ENCODE measurements at regions of chr10 and their contacts with region 1.

Region 1: DNA sequence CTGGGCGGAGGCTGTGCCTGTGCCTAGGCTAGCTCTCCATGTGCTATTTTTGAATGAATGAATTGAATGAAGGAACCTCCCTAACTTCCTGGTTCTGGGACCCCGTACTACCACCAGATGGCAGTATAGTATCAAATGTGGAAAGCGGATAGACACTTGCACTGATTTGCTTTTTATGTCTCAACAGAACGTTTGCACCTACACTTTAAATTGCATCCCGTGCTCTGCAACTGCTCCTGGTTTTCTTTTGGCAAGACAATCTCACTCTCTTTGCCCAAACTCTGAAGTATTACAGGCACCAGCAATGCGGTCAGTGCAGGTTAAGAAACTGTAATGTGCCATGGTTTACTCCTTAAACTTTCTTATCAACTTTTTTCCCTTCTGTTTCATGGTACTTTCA is 6.5 kb downstream of the FZD8 start:
- DNase-seq: peak; percentile 81
- H3K4me3 ChIP-seq: no peak overlapping the region
- H3K27ac ChIP-seq: no peak overlapping the region
- H3K4me1 ChIP-seq: no peaks in the 10 kb centered on the region
- CTCF ChIP-seq: peak; percentile 95

Region 2: DNA sequence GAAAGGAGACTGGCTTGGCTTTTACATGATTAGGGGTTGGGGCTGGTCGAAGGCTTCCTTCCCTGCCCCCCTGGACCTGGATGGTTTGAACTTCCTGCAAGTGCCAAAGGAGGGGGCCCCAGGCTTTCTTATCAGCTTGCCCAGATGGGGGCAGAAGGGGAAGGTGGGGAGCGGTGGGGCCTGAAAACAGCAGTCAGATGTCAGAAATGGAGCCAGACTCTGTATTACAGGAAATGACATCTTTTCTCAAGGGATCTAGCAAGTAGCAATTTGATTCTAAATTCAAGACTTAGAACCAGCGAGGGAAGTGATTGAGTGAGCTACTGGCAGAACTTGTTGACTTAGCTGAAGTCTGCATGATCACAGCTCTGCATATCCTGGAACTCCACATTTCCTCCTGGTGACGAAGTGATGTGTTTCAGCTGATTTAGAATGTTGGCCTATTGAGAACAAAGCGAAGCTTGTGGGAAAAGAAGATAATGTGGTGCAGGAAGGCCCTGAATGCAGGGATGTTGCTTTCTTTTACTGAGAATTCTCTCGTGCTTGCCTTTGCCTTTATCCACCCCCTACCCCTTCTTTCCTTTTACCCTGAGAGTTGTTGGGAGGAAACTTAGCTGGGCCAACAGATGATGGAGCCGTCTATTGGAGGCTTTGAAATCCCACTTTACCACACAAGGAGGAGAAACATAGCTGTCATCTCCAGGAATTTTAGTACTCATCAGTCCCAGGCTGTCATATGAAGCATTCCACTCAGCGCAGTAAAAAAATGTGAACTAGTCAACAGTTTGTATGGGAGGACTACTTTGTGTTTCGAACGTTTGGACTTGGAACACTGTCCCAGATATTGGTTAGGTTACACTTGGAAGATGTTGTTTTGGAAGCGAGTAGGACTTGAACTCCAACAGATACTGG is 256.1 kb before region 1 on chr10:
- CTCF ChIA-PET with region 1: interaction called, 3 read pairs
- POLR2A ChIA-PET with region 1: no interaction called
- intact Hi-C with region 1: loop called (anchors 2 kb)
- DNase-seq: peak; percentile 93
- H3K4me3 ChIP-seq: peak overlapping the region; percentile 60
- H3K27ac ChIP-seq: peak overlapping the region; percentile 90
- H3K4me1 ChIP-seq: peaks cover 57% of the 10 kb centered on the region
- CTCF ChIP-seq: peak; percentile 81

Region 3: GRCh38 chr10:35781643-35782035 is 146.1 kb after region 1 on chr10:
- CTCF ChIA-PET with region 1: interaction called, 3 read pairs
- POLR2A ChIA-PET with region 1: no interaction called
- intact Hi-C with region 1: loop called (anchors 2 kb)
- DNase-seq: peak; percentile 25
- H3K4me3 ChIP-seq: no peak overlapping the region
- H3K27ac ChIP-seq: no peak overlapping the region
- H3K4me1 ChIP-seq: no peaks in the 10 kb centered on the region
- CTCF ChIP-seq: peak; percentile 73

Region 4: GRCh38 chr10:35916791-35917190 is 281.2 kb after region 1 on chr10:
- CTCF ChIA-PET with region 1: no interaction called
- POLR2A ChIA-PET with region 1: no interaction called
- intact Hi-C with region 1: loop called (anchors 10 kb)
- DNase-seq: peak; percentile 5
- H3K4me3 ChIP-seq: no peak overlapping the region
- H3K27ac ChIP-seq: no peak overlapping the region
- H3K4me1 ChIP-seq: no peaks in the 10 kb centered on the region
- CTCF ChIP-seq: peak; percentile 55

Region 5: DNA sequence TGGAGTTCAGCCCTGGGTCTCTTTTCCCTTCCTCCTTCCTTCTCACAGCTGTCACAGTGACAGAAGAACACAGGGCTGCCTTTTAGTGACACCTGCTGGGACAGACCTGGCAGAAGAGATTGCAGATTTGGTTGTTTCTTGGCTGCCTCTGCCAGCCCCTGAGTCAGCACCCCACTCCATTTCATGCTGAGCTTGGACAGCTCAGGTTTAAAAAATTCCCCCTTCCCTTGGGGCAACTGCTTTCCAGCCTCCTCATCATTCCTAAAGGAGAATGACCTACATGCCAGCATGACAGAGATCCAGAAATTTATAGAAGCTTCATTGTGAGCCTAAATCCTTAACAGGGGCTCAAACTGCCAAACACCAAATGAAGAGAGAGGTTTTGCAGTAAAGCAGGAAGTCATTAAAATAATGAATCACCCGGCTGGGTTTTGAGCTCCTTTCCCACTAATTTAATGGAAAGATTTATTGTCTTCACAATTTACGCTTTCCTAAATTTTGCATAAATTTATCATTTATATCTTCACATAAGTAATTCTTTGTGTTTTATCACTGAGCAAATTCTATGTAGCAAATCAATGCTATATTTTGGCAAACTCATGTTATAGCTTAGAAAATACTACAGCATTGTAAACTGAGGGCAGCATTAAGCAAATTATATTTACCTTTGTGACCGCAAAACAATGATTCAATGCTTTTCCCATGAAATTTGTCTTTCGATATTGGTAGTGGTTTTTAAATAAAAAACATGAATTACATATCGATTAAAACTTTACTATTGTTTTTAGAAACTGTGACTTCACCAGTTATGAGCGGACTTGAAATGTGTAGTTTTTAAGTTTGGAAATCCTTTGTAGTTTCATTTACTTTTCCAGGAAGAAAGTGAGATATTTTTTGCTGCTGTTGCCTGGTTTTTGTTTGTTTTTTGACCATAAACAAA is 1090.3 kb after region 1 on chr10:
- CTCF ChIA-PET with region 1: no interaction called
- POLR2A ChIA-PET with region 1: no interaction called
- intact Hi-C with region 1: loop called (anchors 10 kb)
- DNase-seq: peak; percentile 5
- H3K4me3 ChIP-seq: no peak overlapping the region
- H3K27ac ChIP-seq: no peak overlapping the region
- H3K4me1 ChIP-seq: no peaks in the 10 kb centered on the region
- CTCF ChIP-seq: 0 out of 2 replicates have a peak, but pooled peaks have one; percentile 21

Region 6: GRCh38 chr10:36872702-36873393 is 1237.3 kb after region 1 on chr10:
- CTCF ChIA-PET with region 1: no interaction called
- POLR2A ChIA-PET with region 1: no interaction called
- intact Hi-C with region 1: loop called (anchors 2 kb)
- DNase-seq: peak; percentile 63
- H3K4me3 ChIP-seq: no peak overlapping the region
- H3K27ac ChIP-seq: peak overlapping the region; percentile 15
- H3K4me1 ChIP-seq: peaks cover 22% of the 10 kb centered on the region
- CTCF ChIP-seq: no peak

Region 7: DNA sequence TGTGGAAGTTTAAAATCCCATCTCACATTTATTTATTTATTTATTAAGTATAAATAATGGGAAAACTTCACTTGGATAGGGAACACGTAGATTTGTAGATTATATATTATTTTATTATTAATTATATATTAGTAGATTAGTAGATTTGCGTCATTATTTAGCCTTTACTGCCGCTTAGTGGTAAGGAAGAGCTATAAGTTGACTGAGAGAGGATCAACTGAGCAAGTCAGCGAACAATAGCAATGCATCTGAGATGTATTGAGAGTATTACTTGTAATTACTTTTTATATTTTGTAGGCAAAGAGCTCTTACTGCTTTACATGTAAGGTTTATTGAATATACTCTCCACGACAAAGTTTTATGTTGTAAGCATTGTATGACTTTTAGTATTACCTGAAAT is 1245.3 kb after region 1 on chr10:
- CTCF ChIA-PET with region 1: interaction called, 5 read pairs
- POLR2A ChIA-PET with region 1: interaction called, 4 read pairs
- intact Hi-C with region 1: loop called (anchors 2 kb)
- DNase-seq: peak; percentile 48
- H3K4me3 ChIP-seq: no peak overlapping the region
- H3K27ac ChIP-seq: no peak overlapping the region
- H3K4me1 ChIP-seq: no peaks in the 10 kb centered on the region
- CTCF ChIP-seq: peak; percentile 72

Measured in OCI-LY7 (cell line).